ENCODE measurements at regions of chr16 and their contacts with region 1.

Region 1: GRCh38 chr16:48687421-48688038 is 77.5 kb upstream of the N4BP1 start:
- DNase-seq: peak; percentile 62 to 78
- H3K4me3 ChIP-seq: no peak overlapping the region
- H3K4me3 Mint-ChIP-seq: no peak overlapping the region
- H3K27ac Mint-ChIP-seq: no peak overlapping the region
- H3K4me1 ChIP-seq: no peaks in the 10 kb centered on the region
- H3K4me1 Mint-ChIP-seq: no peaks in the 10 kb centered on the region
- H3K27me3 ChIP-seq: no peaks in the 10 kb centered on the region
- H3K27me3 Mint-ChIP-seq: peaks cover 23% of the 10 kb centered on the region
- CTCF ChIP-seq: peak; percentile 85 to 88

Region 2: GRCh38 chr16:48999508-48999907 is 312.0 kb after region 1 on chr16:
- CTCF ChIA-PET with region 1: no interaction called
- POLR2A ChIA-PET with region 1: no interaction called
- intact Hi-C with region 1: loop called (anchors 2 kb)
- DNase-seq: no peak
- H3K4me3 ChIP-seq: no peak overlapping the region
- H3K4me3 Mint-ChIP-seq: no peak overlapping the region
- H3K27ac Mint-ChIP-seq: no peak overlapping the region
- H3K4me1 ChIP-seq: peaks cover 12% of the 10 kb centered on the region
- H3K4me1 Mint-ChIP-seq: peaks cover 15% of the 10 kb centered on the region
- H3K27me3 ChIP-seq: no peaks in the 10 kb centered on the region
- H3K27me3 Mint-ChIP-seq: peaks cover 2% of the 10 kb centered on the region
- CTCF ChIP-seq: no peak

Region 3: GRCh38 chr16:49281843-49282642 is 594.5 kb after region 1 on chr16:
- CTCF ChIA-PET with region 1: no interaction called
- POLR2A ChIA-PET with region 1: no interaction called
- intact Hi-C with region 1: loop called (anchors 10 kb)
- DNase-seq: peak; percentile 92 to 96
- H3K4me3 ChIP-seq: peak overlapping the region; percentile 58
- H3K4me3 Mint-ChIP-seq: peak overlapping the region; percentile 56
- H3K27ac Mint-ChIP-seq: no peak overlapping the region
- H3K4me1 ChIP-seq: peaks cover 8% of the 10 kb centered on the region
- H3K4me1 Mint-ChIP-seq: no peaks in the 10 kb centered on the region
- H3K27me3 ChIP-seq: peaks cover 8% of the 10 kb centered on the region
- H3K27me3 Mint-ChIP-seq: peaks cover 37% of the 10 kb centered on the region
- CTCF ChIP-seq: peak; percentile 25 to 50

Region 4: DNA sequence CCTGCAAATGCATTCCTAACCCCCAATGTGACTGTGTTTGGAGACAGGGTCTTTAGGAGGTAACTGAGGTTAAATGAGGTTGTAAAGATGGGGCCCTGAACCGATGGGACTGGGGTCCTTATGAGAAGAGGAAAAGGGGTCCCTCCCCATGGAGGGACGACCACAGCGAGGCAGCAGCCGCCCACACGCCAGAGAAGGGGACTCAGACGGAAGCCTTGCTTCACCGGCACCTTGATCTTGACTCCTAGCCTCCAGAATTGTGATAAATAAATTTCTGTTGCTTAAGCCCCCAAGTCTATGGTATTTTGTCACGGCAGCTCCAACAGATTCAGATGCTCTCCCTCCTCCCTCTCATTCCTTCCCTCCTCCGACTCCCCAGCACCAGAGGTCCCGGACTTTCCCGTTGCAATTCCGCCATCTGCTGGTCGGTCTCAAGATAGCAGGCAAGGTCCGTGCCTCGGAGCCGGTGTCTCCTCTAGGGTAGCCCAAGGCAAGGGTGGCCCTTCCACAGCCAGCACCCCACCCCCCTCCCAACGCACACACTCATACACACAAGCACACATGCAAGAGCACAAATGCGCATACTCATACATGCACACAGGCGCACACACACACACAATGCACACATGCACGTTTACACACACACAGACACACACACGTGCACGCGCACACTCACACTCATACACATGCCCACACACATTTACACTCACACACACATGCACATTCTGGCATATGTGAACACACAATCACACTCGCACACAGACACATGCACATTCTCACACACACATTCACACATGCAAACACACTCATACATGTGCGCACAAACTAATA is 663.0 kb after region 1 on chr16:
- CTCF ChIA-PET with region 1: interaction called, 6 read pairs
- POLR2A ChIA-PET with region 1: no interaction called
- intact Hi-C with region 1: loop called (anchors 1 kb)
- DNase-seq: peak; percentile 65 to 79
- H3K4me3 ChIP-seq: no peak overlapping the region
- H3K4me3 Mint-ChIP-seq: no peak overlapping the region
- H3K27ac Mint-ChIP-seq: no peak overlapping the region
- H3K4me1 ChIP-seq: no peaks in the 10 kb centered on the region
- H3K4me1 Mint-ChIP-seq: no peaks in the 10 kb centered on the region
- H3K27me3 ChIP-seq: no peaks in the 10 kb centered on the region
- H3K27me3 Mint-ChIP-seq: peaks cover 6% of the 10 kb centered on the region
- CTCF ChIP-seq: peak; percentile 90 to 91